AG04450 (cell line): ENCODE measurements at regions of chr16 and their contacts with region 1.

Region 1: GRCh38 chr16:49631187-49632041 is 224.5 kb downstream of the ZNF423 start:
- DNase-seq: no peak
- H3K4me3 ChIP-seq: no peak overlapping the region
- H3K27ac ChIP-seq: no peak overlapping the region
- H3K27me3 ChIP-seq: peaks cover 2% of the 10 kb centered on the region
- CTCF ChIP-seq: no peak

Region 2: DNA sequence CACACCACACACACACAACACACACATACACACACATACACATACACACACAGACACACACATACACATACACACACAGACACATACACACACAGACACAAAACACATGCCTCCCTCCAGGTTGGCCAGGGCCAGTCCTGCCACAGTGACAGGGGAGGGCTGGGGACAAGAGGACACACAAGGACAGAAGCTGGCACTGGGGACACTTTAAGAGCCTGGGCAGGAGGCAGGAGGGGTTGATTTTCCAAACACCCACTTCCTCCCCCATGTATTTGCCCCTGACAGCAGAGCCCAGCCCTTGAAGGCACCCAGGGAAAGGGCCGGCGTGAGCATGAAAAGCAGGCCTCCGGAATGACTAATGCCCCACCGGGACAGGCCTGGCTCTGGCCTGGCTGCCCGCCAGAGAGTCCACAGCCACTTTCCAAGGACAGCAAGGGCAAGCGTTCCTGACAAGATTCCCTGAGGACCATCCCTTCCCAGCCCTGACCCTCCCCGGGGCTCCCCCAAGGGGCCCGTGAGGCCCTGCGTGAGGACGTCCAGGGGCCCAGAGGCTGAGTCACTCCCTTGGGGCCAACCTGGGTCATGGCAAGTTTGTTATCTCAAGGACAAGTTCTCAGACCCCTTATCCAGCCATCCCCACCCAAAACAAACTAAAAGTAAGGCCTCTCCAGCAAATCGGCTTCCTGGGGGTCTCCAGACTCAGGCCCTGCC is 11.1 kb before region 1 on chr16:
- CTCF ChIA-PET with region 1: no interaction called
- POLR2A ChIA-PET with region 1: no interaction called
- DNase-seq: no peak
- H3K4me3 ChIP-seq: no peak overlapping the region
- H3K27ac ChIP-seq: no peak overlapping the region
- H3K27me3 ChIP-seq: peaks cover 12% of the 10 kb centered on the region
- CTCF ChIP-seq: no peak

Region 3: DNA sequence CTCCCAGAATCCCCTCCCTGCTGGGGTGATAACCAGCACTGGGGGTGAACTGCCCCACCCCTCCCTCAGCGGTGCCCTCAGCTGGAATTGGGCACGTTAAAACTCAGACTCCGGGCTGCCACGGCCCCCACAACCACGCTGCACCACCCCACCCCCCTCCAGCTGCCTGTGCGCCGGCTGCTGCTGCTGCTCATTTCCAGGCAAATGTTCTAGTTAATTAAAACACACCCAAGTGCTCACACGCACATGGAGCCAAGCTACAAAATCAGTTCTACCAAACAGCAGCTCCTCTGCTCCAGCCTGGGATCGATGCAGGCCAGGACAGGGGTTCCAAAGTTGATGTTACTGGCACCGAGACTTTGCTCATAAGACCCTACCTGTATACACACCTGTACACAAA is 44.0 kb after region 1 on chr16:
- CTCF ChIA-PET with region 1: no interaction called
- POLR2A ChIA-PET with region 1: interaction called, 15 read pairs
- DNase-seq: no peak
- H3K4me3 ChIP-seq: no peak overlapping the region
- H3K27ac ChIP-seq: no peak overlapping the region
- H3K27me3 ChIP-seq: peaks cover under 1% of the 10 kb centered on the region
- CTCF ChIP-seq: no peak

Region 4: DNA sequence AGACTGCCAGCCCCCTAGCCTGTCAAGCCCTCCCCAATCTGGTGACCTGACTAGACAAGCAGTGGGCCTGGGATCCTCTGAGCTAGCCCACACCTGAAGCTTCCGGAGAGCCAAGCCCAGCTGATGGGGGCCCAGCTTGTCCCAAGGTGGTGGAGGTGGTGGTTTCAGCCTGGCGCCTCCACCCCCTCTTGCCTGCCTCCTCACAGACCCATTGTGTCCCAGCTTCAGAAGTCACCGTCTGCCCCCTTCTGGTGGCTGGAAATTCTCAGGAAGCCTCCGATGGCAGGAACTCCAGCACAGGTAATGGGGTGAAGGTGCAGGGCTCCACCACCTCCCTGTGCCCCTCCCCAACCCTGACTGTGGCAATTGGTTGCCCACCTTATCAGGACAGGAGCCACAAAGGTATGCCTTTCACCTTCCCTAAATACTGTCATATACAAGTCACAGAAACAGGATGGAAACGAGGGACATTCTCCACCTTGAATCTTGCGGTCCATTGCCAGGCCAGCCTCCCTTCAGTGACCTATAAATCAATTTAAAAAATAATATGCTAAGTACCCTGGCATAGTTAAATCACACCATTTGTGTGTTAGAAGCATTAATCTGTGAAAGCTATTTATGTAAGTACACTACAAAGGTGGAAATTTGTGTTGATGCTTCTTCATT is 290.5 kb after region 1 on chr16:
- CTCF ChIA-PET with region 1: interaction called, 13 read pairs
- POLR2A ChIA-PET with region 1: no interaction called
- DNase-seq: no peak
- H3K4me3 ChIP-seq: no peak overlapping the region
- H3K27ac ChIP-seq: no peak overlapping the region
- H3K27me3 ChIP-seq: no peaks in the 10 kb centered on the region
- CTCF ChIP-seq: peak; percentile 51